Gastrocnemius medialis (tissue), 4 donors: ENCODE measurements at regions of chr9 and their contacts with region 1.

Region 1: GRCh38 chr9:116365056-116365471 is 211.5 kb downstream of the PAPPA start:
- DNase-seq: peak; percentile 61 to 74
- ATAC-seq: peak; percentile 86 to 89
- H3K4me3 ChIP-seq: peak overlapping the region in 2 of 4 donors; percentile 18 to 21
- H3K27ac ChIP-seq: peak overlapping the region; percentile 24 to 69 (median 54)
- H3K4me1 ChIP-seq: peaks cover 39 to 40% of the 10 kb centered on the region in 2 donors
- H3K27me3 ChIP-seq: no peaks in the 10 kb centered on the region
- CTCF ChIP-seq: peak in 2 of 5 experiments; percentile 27 to 45
- POLR2A ChIP-seq: no peak

Region 2: DNA sequence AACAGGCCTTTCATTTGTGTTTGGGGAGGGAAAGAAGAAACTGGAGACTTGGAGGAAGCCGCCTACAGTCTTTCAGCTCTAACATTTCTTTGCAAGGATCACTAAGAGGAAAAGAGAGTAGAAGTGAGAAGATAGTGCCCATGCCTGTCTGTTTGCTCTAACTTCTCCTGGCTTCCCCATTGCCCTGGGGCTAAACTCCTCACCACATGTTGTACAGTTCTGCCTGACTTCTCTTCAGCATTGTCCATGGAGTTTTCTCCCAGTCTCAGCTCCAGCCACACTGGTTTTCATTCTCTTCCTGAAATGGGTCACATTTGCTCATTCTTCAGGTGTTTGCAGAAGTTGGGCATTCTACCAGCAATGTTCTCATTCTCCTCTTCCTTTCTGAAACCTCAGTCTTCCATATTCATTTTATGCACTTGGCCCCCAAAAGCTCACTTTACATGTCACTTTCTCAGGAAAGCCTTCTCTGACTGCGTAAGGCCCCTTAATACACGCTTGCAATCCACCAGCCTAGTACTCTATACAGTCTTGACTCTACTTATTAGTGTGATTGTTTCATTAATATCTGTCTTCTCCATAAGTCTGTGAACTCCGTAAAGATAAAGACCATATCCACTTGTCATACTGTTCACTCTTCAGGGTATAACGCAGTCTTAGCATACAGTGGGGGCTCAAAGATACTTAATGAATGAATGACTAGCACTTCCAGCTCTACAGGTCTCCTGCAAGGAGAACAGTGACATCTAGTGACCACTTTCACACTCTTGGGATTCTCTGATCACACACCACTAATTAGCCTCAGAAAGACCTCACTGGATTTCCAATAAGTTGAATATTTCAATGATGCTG is 281.8 kb after region 1 on chr9:
- in situ Hi-C with region 1: no loop called
- intact Hi-C with region 1: loop called (anchors 5 kb)
- DNase-seq: no peak
- ATAC-seq: peak; percentile 76 to 79
- H3K4me3 ChIP-seq: no peak overlapping the region
- H3K27ac ChIP-seq: peak overlapping the region; percentile 81 to 93 (median 82)
- H3K4me1 ChIP-seq: peaks cover 20 to 55% of the 10 kb centered on the region in 2 donors
- H3K27me3 ChIP-seq: no peaks in the 10 kb centered on the region
- CTCF ChIP-seq: peak; percentile 34 to 61 (median 44)
- POLR2A ChIP-seq: no peak